ENCODE measurements at regions of chr6 and their contacts with region 1.

Region 1: DNA sequence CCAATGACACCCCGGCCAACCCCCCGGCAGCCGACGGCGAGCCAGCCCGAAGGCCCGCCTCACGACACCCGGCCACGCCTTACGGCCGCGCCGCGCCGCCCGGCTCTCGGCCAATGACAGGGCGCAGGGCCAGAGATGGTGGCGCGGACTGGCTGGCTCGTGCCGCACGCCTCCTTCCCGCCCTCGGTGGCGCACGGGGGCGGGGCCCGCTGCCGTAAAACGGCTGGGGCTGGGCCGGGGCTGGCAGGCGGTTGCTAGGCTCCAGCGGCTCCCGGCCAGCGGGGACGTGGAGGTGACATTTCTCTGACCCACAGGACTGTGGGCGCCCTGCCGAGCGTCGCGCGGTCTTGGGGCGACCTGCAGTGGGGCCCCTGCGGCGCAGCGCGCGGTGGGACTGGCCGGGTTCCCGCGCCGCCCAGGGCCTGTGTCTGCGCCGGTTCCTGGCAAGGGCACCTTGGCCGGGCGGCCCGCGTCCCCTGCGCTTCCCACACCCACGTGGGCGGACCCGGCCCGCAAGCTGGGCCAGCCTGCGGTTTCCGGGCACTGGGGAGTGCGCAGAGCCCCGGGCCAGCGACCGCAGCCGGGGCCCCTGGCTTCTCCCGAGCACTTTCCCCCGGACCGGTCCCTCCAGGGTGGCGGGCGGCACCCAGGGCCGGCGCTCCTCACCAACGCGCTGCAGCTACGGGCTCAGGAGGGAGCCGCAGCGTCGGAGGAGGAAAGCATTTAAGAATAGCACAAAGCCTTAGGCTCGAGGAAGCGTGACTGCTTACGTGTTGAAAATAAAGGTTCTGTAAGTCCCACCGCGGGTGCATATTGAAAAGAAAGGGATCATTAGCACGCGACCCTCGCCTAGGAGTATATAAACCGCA is at the start of gene MPC1:
- DNase-seq: peak; percentile 95
- ATAC-seq: peak; percentile 94
- H3K4me3 Mint-ChIP-seq: peak within 1 kb of the TSS; percentile 82
- H3K27ac Mint-ChIP-seq: peak within 1 kb of the TSS; percentile 65
- H3K4me1 Mint-ChIP-seq: peaks cover 7% of the 10 kb centered on the region
- H3K27me3 Mint-ChIP-seq: no peaks in the 10 kb centered on the region
- CTCF ChIP-seq: no peak
- total RNA-seq, gene MPC1: 17.4 to 20.3 TPM

Region 2: GRCh38 chr6:166275714-166276166 is 107.4 kb before region 1 on chr6:
- CTCF ChIA-PET with region 1: interaction called, 14 read pairs
- POLR2A ChIA-PET with region 1: no interaction called
- intact Hi-C with region 1: no loop called
- DNase-seq: peak; percentile 78
- ATAC-seq: peak; percentile 97
- H3K4me3 Mint-ChIP-seq: no peak overlapping the region
- H3K27ac Mint-ChIP-seq: no peak overlapping the region
- H3K4me1 Mint-ChIP-seq: peaks cover 6% of the 10 kb centered on the region
- H3K27me3 Mint-ChIP-seq: peaks cover 1% of the 10 kb centered on the region
- CTCF ChIP-seq: peak; percentile 99

Region 3: GRCh38 chr6:166333172-166333995 is 49.8 kb before region 1 on chr6:
- CTCF ChIA-PET with region 1: interaction called, 11 read pairs
- POLR2A ChIA-PET with region 1: no interaction called
- intact Hi-C with region 1: no loop called
- DNase-seq: peak; percentile 57
- ATAC-seq: peak; percentile 90
- H3K4me3 Mint-ChIP-seq: peak overlapping the region; percentile 46
- H3K27ac Mint-ChIP-seq: peak overlapping the region; percentile 52
- H3K4me1 Mint-ChIP-seq: peaks cover 53% of the 10 kb centered on the region
- H3K27me3 Mint-ChIP-seq: no peaks in the 10 kb centered on the region
- CTCF ChIP-seq: no peak

Region 4: DNA sequence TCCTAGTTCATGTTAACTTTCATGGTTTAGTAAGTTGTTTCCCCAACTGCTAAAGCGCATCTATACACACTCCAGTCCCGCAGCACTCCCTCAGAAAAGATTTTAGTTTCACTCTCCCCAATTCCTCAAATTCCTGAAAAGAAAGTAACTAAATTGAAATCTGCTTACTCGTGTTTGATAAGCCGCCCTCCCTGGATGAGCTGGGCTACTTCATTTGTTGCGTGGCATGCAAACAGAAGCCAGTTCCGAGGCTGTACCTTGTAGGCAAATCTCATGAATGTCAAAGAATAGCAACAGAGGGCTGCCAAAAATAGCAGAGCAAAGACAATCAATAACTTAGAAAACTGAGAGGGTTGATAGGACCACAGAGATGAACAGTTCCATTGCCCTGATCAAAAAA is 17.4 kb before region 1 on chr6:
- CTCF ChIA-PET with region 1: interaction called, 10 read pairs
- POLR2A ChIA-PET with region 1: no interaction called
- intact Hi-C with region 1: no loop called
- DNase-seq: no peak
- ATAC-seq: no peak
- H3K4me3 Mint-ChIP-seq: no peak overlapping the region
- H3K27ac Mint-ChIP-seq: no peak overlapping the region
- H3K4me1 Mint-ChIP-seq: no peaks in the 10 kb centered on the region
- H3K27me3 Mint-ChIP-seq: no peaks in the 10 kb centered on the region
- CTCF ChIP-seq: no peak

Region 5: DNA sequence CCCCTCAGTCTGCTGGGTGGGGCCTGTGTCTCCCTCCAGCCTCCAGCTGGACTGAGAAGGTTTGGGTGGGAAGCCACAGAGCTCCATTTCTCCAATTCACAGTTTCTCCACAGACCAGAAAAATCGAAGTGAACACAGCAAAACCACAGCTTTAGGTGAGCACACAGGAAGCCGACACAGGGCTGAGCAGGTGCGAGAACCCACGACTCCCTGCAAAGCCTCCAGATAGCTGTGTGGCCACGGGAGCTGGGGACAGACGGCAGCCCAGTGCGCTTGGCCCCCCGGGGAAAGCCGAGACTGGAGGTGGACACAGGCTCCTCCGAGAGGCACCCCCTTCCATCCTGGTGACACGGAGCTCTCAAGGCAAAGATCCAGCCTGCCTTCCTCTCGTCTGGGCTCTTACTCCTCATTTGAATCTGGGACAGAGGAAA is 28.6 kb after region 1 on chr6:
- CTCF ChIA-PET with region 1: interaction called, 12 read pairs
- POLR2A ChIA-PET with region 1: no interaction called
- intact Hi-C with region 1: no loop called
- DNase-seq: peak; percentile 53
- ATAC-seq: peak; percentile 64
- H3K4me3 Mint-ChIP-seq: peak overlapping the region; percentile 1
- H3K27ac Mint-ChIP-seq: peak overlapping the region; percentile 3
- H3K4me1 Mint-ChIP-seq: peaks cover 63% of the 10 kb centered on the region
- H3K27me3 Mint-ChIP-seq: no peaks in the 10 kb centered on the region
- CTCF ChIP-seq: no peak

Region 6: DNA sequence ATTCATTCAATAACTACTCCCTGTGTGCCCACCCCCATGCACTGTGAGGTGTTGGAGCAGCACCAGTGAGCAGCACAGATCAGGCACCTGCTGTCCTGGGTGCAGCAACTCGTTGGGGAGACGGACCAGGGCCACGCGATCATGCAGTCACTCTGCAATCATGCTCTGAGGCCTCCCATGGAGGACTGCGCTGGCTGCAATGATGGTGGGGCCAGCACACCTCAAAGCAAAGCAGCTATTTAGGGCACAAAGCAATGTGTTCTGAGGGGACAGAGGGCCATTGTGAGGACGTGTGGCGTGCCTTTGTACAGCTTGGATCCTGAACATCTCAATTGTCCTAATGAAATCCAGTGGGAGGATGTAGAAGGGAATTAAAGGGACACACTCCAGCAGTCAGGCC is 40.6 kb after region 1 on chr6:
- CTCF ChIA-PET with region 1: no interaction called
- POLR2A ChIA-PET with region 1: no interaction called
- intact Hi-C with region 1: no loop called
- DNase-seq: no peak
- ATAC-seq: no peak
- H3K4me3 Mint-ChIP-seq: no peak overlapping the region
- H3K27ac Mint-ChIP-seq: no peak overlapping the region
- H3K4me1 Mint-ChIP-seq: peaks cover 25% of the 10 kb centered on the region
- H3K27me3 Mint-ChIP-seq: no peaks in the 10 kb centered on the region
- CTCF ChIP-seq: no peak